ENCODE measurements at regions of chr3 and their contacts with region 1.

Region 1: GRCh38 chr3:169966428-169966950 is at the start of gene SEC62:
- DNase-seq: peak; percentile 92 to 97 (median 94)
- ATAC-seq: peak; percentile 84
- H3K4me3 ChIP-seq: peak within 1 kb of the TSS; percentile 66
- H3K4me3 Mint-ChIP-seq: peak within 1 kb of the TSS; percentile 99
- H3K27ac ChIP-seq: peak within 1 kb of the TSS; percentile 84 to 92
- H3K27ac Mint-ChIP-seq: peak within 1 kb of the TSS; percentile 99
- H3K4me1 ChIP-seq: peaks cover 18% of the 10 kb centered on the region
- H3K4me1 Mint-ChIP-seq: peaks cover 78% of the 10 kb centered on the region
- H3K27me3 ChIP-seq: no peaks in the 10 kb centered on the region
- H3K27me3 Mint-ChIP-seq: no peaks in the 10 kb centered on the region
- CTCF ChIP-seq: no peak
- total RNA-seq, gene SEC62: 113 to 117 TPM

Region 2: DNA sequence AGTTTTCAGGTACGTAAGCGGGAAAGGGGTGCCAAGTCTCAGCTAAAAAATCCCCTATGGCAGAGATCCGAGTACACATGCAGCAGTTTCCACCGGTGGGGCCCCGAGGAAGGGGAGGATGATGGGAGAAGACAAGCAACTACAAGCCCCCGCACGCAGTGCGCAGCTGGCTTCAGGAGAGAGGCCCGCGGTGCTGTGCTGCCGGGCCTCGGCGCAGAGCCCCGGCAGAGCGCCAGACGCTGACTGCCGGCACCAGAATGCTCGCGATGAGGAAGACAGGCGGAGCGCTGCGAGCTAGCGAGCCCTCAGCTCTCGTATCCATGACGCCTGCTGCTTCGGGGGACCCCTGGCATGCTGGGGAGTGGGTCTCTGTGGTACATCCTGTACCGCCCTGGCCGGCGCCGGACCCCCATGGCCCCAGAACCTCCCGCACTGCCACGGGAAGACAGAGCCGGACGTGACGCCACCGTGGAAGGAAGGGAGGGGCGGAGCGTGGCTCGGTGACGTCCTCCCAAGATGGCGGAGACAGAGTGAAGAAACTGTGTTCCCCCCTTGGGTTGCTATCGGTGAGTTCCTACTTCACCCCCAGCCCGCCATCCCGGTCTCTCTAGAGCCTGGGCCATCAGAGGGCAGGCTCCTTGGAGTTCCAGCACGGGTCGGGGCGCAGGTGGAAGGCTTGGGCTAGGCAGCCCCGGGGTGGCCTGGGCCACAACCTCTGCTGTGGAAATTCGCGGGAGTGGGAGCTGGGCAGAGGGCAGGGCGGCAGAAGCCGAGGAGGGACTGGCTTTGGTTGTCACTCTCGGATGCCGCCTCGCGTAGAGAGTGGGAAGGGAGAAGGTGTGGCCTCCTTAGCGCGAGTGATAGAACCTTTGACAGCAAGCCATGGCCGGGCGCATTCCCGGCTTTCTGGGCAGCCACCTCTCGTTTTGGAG is 193.3 kb before region 1 on chr3 and contains the start of gene MYNN:
- CTCF ChIA-PET with region 1: interaction called, 13 read pairs
- POLR2A ChIA-PET with region 1: interaction called, 53 read pairs
- intact Hi-C with region 1: loop called in 1 of 2 experiments (anchors 2 kb)
- DNase-seq: peak; percentile 81 to 96 (median 89)
- ATAC-seq: peak; percentile 80
- H3K4me3 ChIP-seq: peak within 1 kb of the TSS; percentile 83
- H3K4me3 Mint-ChIP-seq: peak within 1 kb of the TSS; percentile 98
- H3K27ac ChIP-seq: peak within 1 kb of the TSS; percentile 98 to 100
- H3K27ac Mint-ChIP-seq: peak within 1 kb of the TSS; percentile 100
- H3K4me1 ChIP-seq: peaks cover 22% of the 10 kb centered on the region
- H3K4me1 Mint-ChIP-seq: peaks cover 69% of the 10 kb centered on the region
- H3K27me3 ChIP-seq: no peaks in the 10 kb centered on the region
- H3K27me3 Mint-ChIP-seq: peaks cover 12% of the 10 kb centered on the region
- CTCF ChIP-seq: no peak
- total RNA-seq, gene MYNN: 18.7 to 20.6 TPM

Region 3: DNA sequence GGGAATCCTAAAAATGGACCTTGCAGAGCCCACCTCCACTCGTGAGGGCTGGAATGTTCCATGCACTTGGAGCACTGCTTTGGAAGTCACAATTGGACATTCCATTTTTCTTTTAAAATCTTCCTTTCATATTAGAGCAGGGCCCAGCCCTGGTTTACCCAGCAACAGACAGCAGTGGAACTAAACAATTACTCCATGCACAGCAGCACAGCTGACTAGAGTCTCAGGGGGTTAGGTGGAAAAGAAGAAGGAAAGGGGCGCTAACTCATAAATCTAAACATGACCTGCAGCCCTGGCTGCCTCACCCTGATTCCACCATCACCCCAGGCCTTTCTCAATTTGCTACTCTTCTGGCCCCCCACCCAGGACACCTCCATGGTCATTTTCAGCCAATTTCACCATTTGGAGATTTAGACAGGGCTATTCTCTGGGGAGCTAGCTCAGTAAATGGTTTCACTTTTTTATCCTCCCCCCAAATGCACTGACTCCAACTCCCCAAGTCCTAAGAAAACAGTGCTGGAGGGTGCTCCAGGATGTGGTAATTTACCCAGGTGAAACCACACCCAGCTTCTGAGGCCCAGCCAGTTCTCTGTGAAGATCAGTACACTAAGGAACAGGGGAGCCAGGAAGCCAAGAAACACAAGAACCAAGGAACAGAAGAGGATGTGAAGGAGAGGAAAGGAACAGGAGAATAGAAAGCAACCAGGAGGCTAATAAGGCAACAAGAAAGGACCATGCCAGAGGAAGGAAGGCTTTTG is 95.2 kb before region 1 on chr3:
- CTCF ChIA-PET with region 1: no interaction called
- POLR2A ChIA-PET with region 1: interaction called, 34 read pairs
- intact Hi-C with region 1: no loop called
- DNase-seq: peak in 2 of 14 experiments; percentile 43 to 52
- ATAC-seq: peak; percentile 78
- H3K4me3 ChIP-seq: no peak overlapping the region
- H3K4me3 Mint-ChIP-seq: peak overlapping the region; percentile 54
- H3K27ac ChIP-seq: no peak overlapping the region
- H3K27ac Mint-ChIP-seq: peak overlapping the region; percentile 12
- H3K4me1 ChIP-seq: peaks cover 11% of the 10 kb centered on the region
- H3K4me1 Mint-ChIP-seq: peaks cover 31% of the 10 kb centered on the region
- H3K27me3 ChIP-seq: no peaks in the 10 kb centered on the region
- H3K27me3 Mint-ChIP-seq: no peaks in the 10 kb centered on the region
- CTCF ChIP-seq: no peak

Region 4: DNA sequence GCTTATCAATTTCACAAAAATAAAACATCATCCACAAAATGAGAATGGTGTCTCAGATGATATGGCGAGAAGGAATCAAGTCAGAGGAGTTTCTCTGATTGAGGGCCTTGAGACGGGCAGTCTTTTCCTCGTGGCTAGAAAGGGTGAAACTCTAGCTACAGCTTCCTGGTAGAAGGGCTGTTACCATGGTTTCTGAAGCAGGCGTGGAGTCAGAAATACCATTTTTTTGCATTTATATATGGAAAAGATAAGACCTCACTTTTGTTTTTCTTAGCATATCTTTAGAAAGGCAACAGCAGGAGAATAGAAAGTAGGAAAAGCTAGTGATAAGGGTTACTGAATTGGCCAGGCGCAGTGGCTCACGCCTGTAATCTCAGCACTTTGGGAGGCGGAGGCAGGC is 72.4 kb before region 1 on chr3:
- CTCF ChIA-PET with region 1: no interaction called
- POLR2A ChIA-PET with region 1: no interaction called
- intact Hi-C with region 1: no loop called
- DNase-seq: no peak
- ATAC-seq: no peak
- H3K4me3 ChIP-seq: no peak overlapping the region
- H3K4me3 Mint-ChIP-seq: no peak overlapping the region
- H3K27ac ChIP-seq: no peak overlapping the region
- H3K27ac Mint-ChIP-seq: no peak overlapping the region
- H3K4me1 ChIP-seq: no peaks in the 10 kb centered on the region
- H3K4me1 Mint-ChIP-seq: no peaks in the 10 kb centered on the region
- H3K27me3 ChIP-seq: no peaks in the 10 kb centered on the region
- H3K27me3 Mint-ChIP-seq: no peaks in the 10 kb centered on the region
- CTCF ChIP-seq: no peak

Region 5: GRCh38 chr3:170021083-170021482 is 54.6 kb after region 1 on chr3:
- CTCF ChIA-PET with region 1: no interaction called
- POLR2A ChIA-PET with region 1: interaction called, 13 read pairs
- intact Hi-C with region 1: no loop called
- DNase-seq: peak in 3 of 14 experiments; percentile 15 to 29 (median 24)
- ATAC-seq: peak; percentile 68
- H3K4me3 ChIP-seq: no peak overlapping the region
- H3K4me3 Mint-ChIP-seq: no peak overlapping the region
- H3K27ac ChIP-seq: no peak overlapping the region
- H3K27ac Mint-ChIP-seq: peak overlapping the region; percentile 10
- H3K4me1 ChIP-seq: peaks cover 5% of the 10 kb centered on the region
- H3K4me1 Mint-ChIP-seq: peaks cover 17% of the 10 kb centered on the region
- H3K27me3 ChIP-seq: no peaks in the 10 kb centered on the region
- H3K27me3 Mint-ChIP-seq: no peaks in the 10 kb centered on the region
- CTCF ChIP-seq: no peak

Region 6: DNA sequence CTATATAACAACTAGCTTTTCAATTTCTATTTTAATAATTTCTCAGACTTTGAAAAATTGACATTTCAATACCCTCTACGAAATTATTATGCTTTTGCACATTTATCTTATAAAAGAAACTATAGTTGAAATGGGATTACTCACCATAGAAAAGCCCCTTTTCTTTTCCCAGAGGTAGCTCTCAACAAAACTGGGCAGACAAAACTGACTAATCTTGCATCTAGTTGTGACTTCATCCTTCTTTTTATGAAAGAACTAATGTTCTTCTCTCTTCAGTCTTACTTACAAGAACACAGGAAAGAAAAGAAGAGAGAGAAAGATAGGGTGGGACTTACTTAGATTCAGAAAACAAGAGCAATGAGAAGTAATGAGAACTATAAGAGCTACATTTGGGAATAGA is 132.3 kb after region 1 on chr3:
- CTCF ChIA-PET with region 1: no interaction called
- POLR2A ChIA-PET with region 1: interaction called, 4 read pairs
- intact Hi-C with region 1: loop called in 1 of 2 experiments (anchors 5 kb)
- DNase-seq: no peak
- ATAC-seq: no peak
- H3K4me3 ChIP-seq: no peak overlapping the region
- H3K4me3 Mint-ChIP-seq: no peak overlapping the region
- H3K27ac ChIP-seq: no peak overlapping the region
- H3K27ac Mint-ChIP-seq: peak overlapping the region; percentile 49
- H3K4me1 ChIP-seq: no peaks in the 10 kb centered on the region
- H3K4me1 Mint-ChIP-seq: no peaks in the 10 kb centered on the region
- H3K27me3 ChIP-seq: no peaks in the 10 kb centered on the region
- H3K27me3 Mint-ChIP-seq: no peaks in the 10 kb centered on the region
- CTCF ChIP-seq: no peak

Region 7: DNA sequence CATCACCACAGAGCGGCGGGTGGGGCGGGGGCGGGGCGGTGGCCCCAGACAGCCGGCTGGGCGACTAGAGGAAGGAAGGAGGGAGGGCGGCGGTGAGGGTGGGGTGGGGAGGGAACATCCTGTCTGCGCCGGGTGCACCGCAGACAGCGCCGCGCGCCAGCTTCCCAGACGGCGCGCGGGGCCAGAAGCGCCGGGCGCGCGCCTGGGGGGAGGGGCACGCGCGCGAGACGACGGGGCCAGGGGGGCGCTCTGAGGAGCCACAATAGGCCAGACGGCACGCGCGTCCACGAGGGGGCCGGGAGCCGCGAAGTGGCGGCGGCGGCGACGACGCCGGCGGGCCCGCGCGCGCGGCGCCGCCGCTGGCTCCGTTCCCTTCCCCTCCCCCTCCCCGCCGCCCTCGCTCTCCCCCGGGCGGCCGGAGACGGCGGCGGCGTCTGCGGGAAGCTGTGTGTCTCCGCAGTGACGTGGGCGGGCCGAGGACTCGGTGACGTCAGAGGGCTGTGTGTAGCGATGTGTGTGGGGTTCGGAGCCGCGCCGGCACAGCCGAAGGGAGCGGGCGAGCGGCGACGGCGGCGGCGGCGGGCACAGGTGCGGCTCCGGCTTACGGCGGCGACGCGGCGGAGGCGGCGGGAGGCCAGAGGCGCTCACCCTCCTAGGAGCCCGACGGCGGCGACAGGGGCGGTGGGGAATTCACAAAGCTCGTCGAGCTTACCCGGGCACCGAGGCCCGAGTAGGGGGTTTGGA is 390.9 kb after region 1 on chr3 and contains the start of gene SKIL:
- CTCF ChIA-PET with region 1: no interaction called
- POLR2A ChIA-PET with region 1: interaction called, 19 read pairs
- intact Hi-C with region 1: loop called in 1 of 2 experiments (anchors 5 kb)
- DNase-seq: peak; percentile 93 to 100 (median 96)
- ATAC-seq: peak; percentile 74
- H3K4me3 ChIP-seq: peak within 1 kb of the TSS; percentile 73
- H3K4me3 Mint-ChIP-seq: peak within 1 kb of the TSS; percentile 98
- H3K27ac ChIP-seq: peak within 1 kb of the TSS; percentile 89 to 97
- H3K27ac Mint-ChIP-seq: peak within 1 kb of the TSS; percentile 98
- H3K4me1 ChIP-seq: peaks cover 35% of the 10 kb centered on the region
- H3K4me1 Mint-ChIP-seq: peaks cover 63% of the 10 kb centered on the region
- H3K27me3 ChIP-seq: no peaks in the 10 kb centered on the region
- H3K27me3 Mint-ChIP-seq: no peaks in the 10 kb centered on the region
- CTCF ChIP-seq: no peak
- total RNA-seq, gene SKIL: 121 to 130 TPM